ENCODE measurements at regions of chr2 and their contacts with region 1.

Region 1: GRCh38 chr2:172084734-172085459 is 410 bp upstream of the DLX1 start:
- DNase-seq: peak; percentile 94 to 98 (median 96)
- ATAC-seq: peak; percentile 96
- H3K4me3 ChIP-seq: peak overlapping the region; percentile 65
- H3K27ac ChIP-seq: peak overlapping the region; percentile 81
- H3K4me1 ChIP-seq: peaks cover 7 to 43% of the 10 kb centered on the region in 2 experiments; a peak in 4 of 5 replicates
- H3K27me3 ChIP-seq: no peaks in the 10 kb centered on the region
- CTCF ChIP-seq: no peak
- EP300 ChIP-seq: peak; percentile 20; the same call in 1 of the 2 replicates
- POLR2A ChIP-seq: peak; percentile 91
- RAD21 ChIP-seq: peak; percentile 5 to 14; a peak in 2 of 4 replicates

Region 2: GRCh38 chr2:171163261-171163660 is 921.6 kb before region 1 on chr2:
- CTCF ChIA-PET with region 1: no interaction called
- POLR2A ChIA-PET with region 1: no interaction called
- in situ Hi-C with region 1: no loop called
- intact Hi-C with region 1: no loop called
- DNase-seq: no peak
- ATAC-seq: no peak
- H3K4me3 ChIP-seq: no peak overlapping the region
- H3K27ac ChIP-seq: peak overlapping the region; percentile 22; the same call in 1 of the 3 replicates
- H3K4me1 ChIP-seq: peaks cover 10 to 20% of the 10 kb centered on the region in 2 experiments
- H3K27me3 ChIP-seq: no peaks in the 10 kb centered on the region
- CTCF ChIP-seq: no peak
- EP300 ChIP-seq: no peak
- POLR2A ChIP-seq: no peak
- RAD21 ChIP-seq: no peak

Region 3: GRCh38 chr2:171847627-171848026 is 237.3 kb before region 1 on chr2:
- CTCF ChIA-PET with region 1: no interaction called
- POLR2A ChIA-PET with region 1: no interaction called
- in situ Hi-C with region 1: no loop called
- intact Hi-C with region 1: no loop called
- DNase-seq: no peak
- ATAC-seq: no peak
- H3K4me3 ChIP-seq: no peak overlapping the region
- H3K27ac ChIP-seq: no peak overlapping the region
- H3K4me1 ChIP-seq: no peaks in the 10 kb centered on the region
- H3K27me3 ChIP-seq: no peaks in the 10 kb centered on the region
- CTCF ChIP-seq: no peak
- EP300 ChIP-seq: no peak
- POLR2A ChIP-seq: no peak
- RAD21 ChIP-seq: no peak

Region 4: GRCh38 chr2:171999604-172000469 is 85.1 kb before region 1 on chr2 and contains the start of gene METAP1D:
- CTCF ChIA-PET with region 1: no interaction called
- POLR2A ChIA-PET with region 1: no interaction called
- in situ Hi-C with region 1: no loop called
- intact Hi-C with region 1: loop called (anchors 2 kb)
- DNase-seq: peak; percentile 98 to 99 (median 98)
- ATAC-seq: peak; percentile 98
- H3K4me3 ChIP-seq: peak within 1 kb of the TSS; percentile 56
- H3K27ac ChIP-seq: peak within 1 kb of the TSS; percentile 93
- H3K4me1 ChIP-seq: peaks cover 6 to 13% of the 10 kb centered on the region in 2 experiments; a peak in 4 of 5 replicates
- H3K27me3 ChIP-seq: no peaks in the 10 kb centered on the region
- CTCF ChIP-seq: peak in 1 of 3 experiments; percentile 2; a peak in 2 of 6 replicates
- EP300 ChIP-seq: no peak
- POLR2A ChIP-seq: peak; percentile 94
- RAD21 ChIP-seq: peak; percentile 38 to 50; a peak in 3 of 4 replicates
- polyA plus RNA-seq, gene METAP1D: 8.0 to 10.4 TPM